ENCODE measurements at regions of chr15 and their contacts with region 1.

Region 1: GRCh38 chr15:40382580-40383456 is at the start of gene KNSTRN:
- DNase-seq: peak; percentile 97
- H3K4me3 Mint-ChIP-seq: peak within 1 kb of the TSS; percentile 94
- H3K27ac Mint-ChIP-seq: peak within 1 kb of the TSS; percentile 95
- H3K4me1 Mint-ChIP-seq: peaks cover 26% of the 10 kb centered on the region
- H3K27me3 Mint-ChIP-seq: peaks cover 11% of the 10 kb centered on the region
- total RNA-seq, gene KNSTRN: 50.4 and 52.9 TPM in 2 replicates

Region 2: GRCh38 chr15:40338041-40338657 is 44.7 kb before region 1 on chr15:
- intact Hi-C with region 1: no loop called
- DNase-seq: peak; percentile 94
- H3K4me3 Mint-ChIP-seq: no peak overlapping the region
- H3K27ac Mint-ChIP-seq: no peak overlapping the region
- H3K4me1 Mint-ChIP-seq: peaks cover 13% of the 10 kb centered on the region
- H3K27me3 Mint-ChIP-seq: no peaks in the 10 kb centered on the region

Region 3: DNA sequence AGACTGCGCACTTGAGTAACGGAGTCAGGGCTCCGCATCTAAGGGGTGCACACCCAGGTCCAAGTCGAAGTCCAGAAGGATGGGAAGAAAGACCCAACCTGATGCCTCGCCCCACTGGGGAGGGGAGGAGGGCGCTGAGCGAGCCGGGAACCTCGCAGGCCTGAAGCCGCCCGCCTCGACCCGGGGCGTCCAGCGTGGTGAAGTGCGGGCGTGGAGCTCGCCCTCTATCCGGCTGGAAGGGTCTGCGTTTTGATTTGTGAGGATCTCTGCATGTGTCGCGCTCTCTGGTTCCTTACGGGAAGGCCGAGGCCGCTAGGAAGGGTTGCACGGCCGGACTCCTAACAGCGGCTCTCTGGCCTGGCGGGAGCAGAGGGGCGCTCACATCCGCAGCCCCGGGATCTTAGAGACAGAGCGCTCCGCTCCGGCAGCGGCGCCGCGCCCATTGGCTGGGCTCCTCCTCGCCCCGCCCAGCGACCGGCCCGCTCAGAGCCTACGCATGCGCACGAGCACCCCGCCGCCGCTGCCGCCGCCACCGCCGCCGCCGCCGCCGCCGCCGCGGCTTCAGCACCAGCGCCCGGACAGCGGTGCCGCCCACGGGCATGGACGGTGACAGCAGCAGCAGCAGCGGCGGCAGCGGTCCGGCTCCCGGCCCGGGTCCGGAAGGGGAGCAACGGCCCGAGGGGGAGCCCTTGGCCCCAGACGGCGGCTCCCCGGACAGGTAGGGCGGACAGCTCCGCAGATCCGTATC is 24.9 kb before region 1 on chr15 and contains the start of gene DISP2:
- intact Hi-C with region 1: loop called (anchors 1 kb)
- DNase-seq: peak; percentile 97
- H3K4me3 Mint-ChIP-seq: peak within 1 kb of the TSS; percentile 82
- H3K27ac Mint-ChIP-seq: peak within 1 kb of the TSS; percentile 45
- H3K4me1 Mint-ChIP-seq: peaks cover 21% of the 10 kb centered on the region
- H3K27me3 Mint-ChIP-seq: peaks cover 34% of the 10 kb centered on the region
- total RNA-seq, gene DISP2: 0.02 and 0.05 TPM in 2 replicates

Region 4: DNA sequence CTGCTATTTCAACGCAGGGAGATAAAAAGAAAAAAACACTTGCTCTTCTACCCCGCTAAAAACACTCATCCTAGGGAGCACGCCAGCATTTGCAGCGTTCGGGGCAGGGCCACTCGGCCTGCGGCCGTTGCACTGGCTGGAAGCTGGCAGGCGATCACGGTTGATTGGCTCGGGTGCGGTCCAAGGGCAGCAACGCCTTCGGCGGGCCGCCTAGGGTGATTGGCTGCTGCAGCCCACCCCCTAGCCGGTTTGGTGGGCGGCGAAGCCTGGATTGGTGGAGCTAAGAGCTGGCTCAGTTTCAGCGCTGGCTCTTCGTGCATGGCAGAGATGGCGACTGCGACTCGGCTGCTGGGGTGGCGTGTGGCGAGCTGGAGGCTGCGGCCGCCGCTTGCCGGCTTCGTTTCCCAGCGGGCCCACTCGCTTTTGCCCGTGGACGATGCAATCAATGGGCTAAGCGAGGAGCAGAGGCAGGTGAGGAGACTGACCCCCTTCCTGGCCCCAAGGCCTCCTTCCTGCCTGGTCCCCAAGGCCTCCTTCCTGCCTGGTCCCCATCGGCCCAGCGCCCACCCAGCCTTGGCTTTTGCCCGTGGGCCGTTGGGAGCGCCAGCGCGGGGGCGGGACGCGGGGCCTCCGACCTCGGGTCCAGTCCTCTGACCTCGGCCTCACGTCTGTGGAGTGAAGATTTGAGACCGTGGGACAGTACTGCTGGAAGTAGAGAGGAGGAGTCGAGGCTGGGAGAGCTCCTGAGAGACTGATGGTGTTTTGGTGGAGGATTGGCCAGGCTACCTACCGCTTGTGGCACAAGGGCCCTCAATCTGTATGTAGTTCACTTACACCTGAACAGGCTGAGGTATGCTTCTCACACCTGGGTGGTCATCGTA is 22.9 kb after region 1 on chr15 and contains the start of gene IVD:
- intact Hi-C with region 1: loop called (anchors 2 kb)
- DNase-seq: peak; percentile 94
- H3K4me3 Mint-ChIP-seq: peak within 1 kb of the TSS; percentile 82
- H3K27ac Mint-ChIP-seq: peak within 1 kb of the TSS; percentile 77
- H3K4me1 Mint-ChIP-seq: peaks cover 41% of the 10 kb centered on the region
- H3K27me3 Mint-ChIP-seq: no peaks in the 10 kb centered on the region
- total RNA-seq, gene IVD: 66.6 and 70.7 TPM in 2 replicates

Measured in activated CD4-positive, alpha-beta T cell treated with anti-CD3 and anti-CD28 coated beads, Interleukin-2, amount 10 ng/mL, durations not matched to agents 24 days and 14 days (primary cell).